MCF 10A (cell line): ENCODE measurements at regions of chr13 and their contacts with region 1.

Region 1: DNA sequence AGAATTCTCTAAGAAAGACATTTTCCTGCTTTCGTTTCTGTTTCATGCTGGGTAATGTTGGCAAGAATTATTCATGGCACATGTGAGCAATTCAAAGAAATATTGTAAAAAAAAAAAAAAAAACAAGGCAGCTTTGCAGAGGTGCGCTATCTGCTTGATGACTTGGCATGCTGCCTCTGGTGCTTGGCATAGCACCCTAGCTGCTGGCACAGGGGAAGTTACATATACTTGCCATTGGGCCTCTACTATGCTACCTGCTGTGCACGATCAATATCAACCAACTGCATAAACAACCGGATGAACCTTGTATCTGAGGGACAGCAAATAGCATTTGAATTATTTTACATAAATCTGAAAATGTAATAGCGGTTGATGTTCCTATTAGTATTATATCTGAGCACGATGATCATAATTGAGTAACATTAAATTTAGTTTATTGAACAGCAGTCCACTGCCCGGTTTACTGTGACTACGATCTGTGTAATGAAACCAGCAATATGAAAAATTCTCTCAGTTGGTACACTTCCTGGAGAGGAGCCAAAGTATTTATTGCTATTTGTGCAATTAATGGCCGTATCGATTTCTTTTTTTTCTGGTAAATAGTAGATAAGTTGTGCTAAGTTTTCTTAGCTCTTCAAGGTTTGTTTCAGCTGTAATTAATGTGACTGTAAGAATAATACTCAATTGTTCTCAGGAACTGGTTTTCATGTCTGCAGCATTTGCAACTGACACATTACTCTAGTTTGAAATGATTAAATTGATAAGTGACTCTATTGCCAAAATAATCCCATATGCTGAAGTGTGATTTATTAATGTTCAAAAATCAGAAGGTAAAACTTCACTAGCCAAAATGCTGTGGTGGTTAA is 717.3 kb downstream of the DACH1 start:
- DNase-seq: no peak
- H3K4me3 Mint-ChIP-seq: no peak overlapping the region
- H3K27ac Mint-ChIP-seq: no peak overlapping the region
- H3K4me1 Mint-ChIP-seq: no peaks in the 10 kb centered on the region
- H3K27me3 Mint-ChIP-seq: peaks cover 69% of the 10 kb centered on the region
- CTCF ChIP-seq: no peak

Region 2: GRCh38 chr13:70080012-70080411 is 1069.7 kb before region 1 on chr13:
- CTCF ChIA-PET with region 1: no interaction called
- POLR2A ChIA-PET with region 1: no interaction called
- intact Hi-C with region 1: loop called (anchors 10 kb)
- DNase-seq: no peak
- H3K4me3 Mint-ChIP-seq: no peak overlapping the region
- H3K27ac Mint-ChIP-seq: no peak overlapping the region
- H3K4me1 Mint-ChIP-seq: no peaks in the 10 kb centered on the region
- H3K27me3 Mint-ChIP-seq: peaks cover 66% of the 10 kb centered on the region
- CTCF ChIP-seq: no peak

Region 3: GRCh38 chr13:72218966-72219365 is 1069.2 kb after region 1 on chr13:
- CTCF ChIA-PET with region 1: no interaction called
- POLR2A ChIA-PET with region 1: no interaction called
- intact Hi-C with region 1: no loop called
- DNase-seq: no peak
- H3K4me3 Mint-ChIP-seq: no peak overlapping the region
- H3K27ac Mint-ChIP-seq: no peak overlapping the region
- H3K4me1 Mint-ChIP-seq: no peaks in the 10 kb centered on the region
- H3K27me3 Mint-ChIP-seq: peaks cover 35% of the 10 kb centered on the region
- CTCF ChIP-seq: no peak